Activated T-helper 1 cell treated with anti-CD3 and anti-CD28 coated beads, Interleukin-12 subunit alpha, Interleukin-12 subunit beta, Interleukin-2, Interleukin-4 antibody, amounts not matched to agents 30 ng/mL and 10 ng/mL and 1 ng/mL, durations not matched to agents 14 hours and 24 hours and 36 hours (primary cell): ENCODE measurements at regions of chr16 and their contacts with region 1.

Region 1: GRCh38 chr16:30407102-30407803 is at the start of gene ZNF771:
- DNase-seq: peak; percentile 85
- H3K4me3 Mint-ChIP-seq: peak within 1 kb of the TSS; percentile 100
- H3K27ac Mint-ChIP-seq: peak within 1 kb of the TSS; percentile 100
- H3K4me1 Mint-ChIP-seq: peaks cover 25% of the 10 kb centered on the region
- H3K27me3 Mint-ChIP-seq: peaks cover 4% of the 10 kb centered on the region
- total RNA-seq, gene ZNF771: 8.1 and 8.9 TPM in 2 replicates

Region 2: GRCh38 chr16:29765167-29766032 is 641.9 kb before region 1 on chr16:
- intact Hi-C with region 1: no loop called
- DNase-seq: no peak
- H3K4me3 Mint-ChIP-seq: no peak overlapping the region
- H3K27ac Mint-ChIP-seq: no peak overlapping the region
- H3K4me1 Mint-ChIP-seq: no peaks in the 10 kb centered on the region
- H3K27me3 Mint-ChIP-seq: peaks cover 15% of the 10 kb centered on the region

Region 3: GRCh38 chr16:30041846-30042267 is 365.4 kb before region 1 on chr16:
- intact Hi-C with region 1: no loop called
- DNase-seq: no peak
- H3K4me3 Mint-ChIP-seq: no peak overlapping the region
- H3K27ac Mint-ChIP-seq: no peak overlapping the region
- H3K4me1 Mint-ChIP-seq: no peaks in the 10 kb centered on the region
- H3K27me3 Mint-ChIP-seq: peaks cover 29% of the 10 kb centered on the region

Region 4: DNA sequence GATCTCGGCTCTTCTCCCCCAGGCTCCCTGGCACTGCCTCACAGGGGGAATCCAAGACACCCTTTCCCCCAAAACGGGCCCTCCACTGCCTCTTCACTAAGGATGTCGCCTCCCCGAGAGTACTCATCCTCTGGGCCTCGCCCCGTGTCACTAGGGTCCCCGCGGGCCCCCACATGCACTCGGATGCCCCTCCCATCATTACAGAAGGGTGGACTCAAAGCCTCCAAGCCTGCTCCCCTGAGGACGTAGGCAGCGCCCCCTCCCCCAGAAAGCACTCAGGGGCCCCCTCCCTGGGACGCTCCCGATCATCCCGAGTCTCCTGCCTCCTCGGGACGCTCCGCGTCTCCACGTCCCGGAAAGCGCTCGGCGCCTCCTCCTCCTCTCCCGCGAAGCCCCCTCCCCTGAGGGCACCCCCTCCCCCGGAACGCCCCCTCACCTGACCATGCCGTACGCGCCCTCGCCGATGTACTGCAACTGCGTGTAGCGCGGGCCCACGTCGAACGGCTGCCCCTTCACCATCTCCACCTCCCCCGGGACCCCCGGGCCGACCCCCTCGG is 284.6 kb before region 1 on chr16:
- intact Hi-C with region 1: loop called (anchors 5 kb)
- DNase-seq: peak; percentile 6
- H3K4me3 Mint-ChIP-seq: peak overlapping the region; percentile 90
- H3K27ac Mint-ChIP-seq: peak overlapping the region; percentile 91
- H3K4me1 Mint-ChIP-seq: peaks cover 32% of the 10 kb centered on the region
- H3K27me3 Mint-ChIP-seq: no peaks in the 10 kb centered on the region

Region 5: GRCh38 chr16:30370444-30371247 is 36.6 kb before region 1 on chr16 and contains the start of gene TBC1D10B:
- intact Hi-C with region 1: loop called (anchors 1 kb)
- DNase-seq: peak; percentile 99
- H3K4me3 Mint-ChIP-seq: peak within 1 kb of the TSS; percentile 94
- H3K27ac Mint-ChIP-seq: peak within 1 kb of the TSS; percentile 89
- H3K4me1 Mint-ChIP-seq: peaks cover 41% of the 10 kb centered on the region
- H3K27me3 Mint-ChIP-seq: no peaks in the 10 kb centered on the region
- total RNA-seq, gene TBC1D10B: 68.9 and 73.6 TPM in 2 replicates

Region 6: DNA sequence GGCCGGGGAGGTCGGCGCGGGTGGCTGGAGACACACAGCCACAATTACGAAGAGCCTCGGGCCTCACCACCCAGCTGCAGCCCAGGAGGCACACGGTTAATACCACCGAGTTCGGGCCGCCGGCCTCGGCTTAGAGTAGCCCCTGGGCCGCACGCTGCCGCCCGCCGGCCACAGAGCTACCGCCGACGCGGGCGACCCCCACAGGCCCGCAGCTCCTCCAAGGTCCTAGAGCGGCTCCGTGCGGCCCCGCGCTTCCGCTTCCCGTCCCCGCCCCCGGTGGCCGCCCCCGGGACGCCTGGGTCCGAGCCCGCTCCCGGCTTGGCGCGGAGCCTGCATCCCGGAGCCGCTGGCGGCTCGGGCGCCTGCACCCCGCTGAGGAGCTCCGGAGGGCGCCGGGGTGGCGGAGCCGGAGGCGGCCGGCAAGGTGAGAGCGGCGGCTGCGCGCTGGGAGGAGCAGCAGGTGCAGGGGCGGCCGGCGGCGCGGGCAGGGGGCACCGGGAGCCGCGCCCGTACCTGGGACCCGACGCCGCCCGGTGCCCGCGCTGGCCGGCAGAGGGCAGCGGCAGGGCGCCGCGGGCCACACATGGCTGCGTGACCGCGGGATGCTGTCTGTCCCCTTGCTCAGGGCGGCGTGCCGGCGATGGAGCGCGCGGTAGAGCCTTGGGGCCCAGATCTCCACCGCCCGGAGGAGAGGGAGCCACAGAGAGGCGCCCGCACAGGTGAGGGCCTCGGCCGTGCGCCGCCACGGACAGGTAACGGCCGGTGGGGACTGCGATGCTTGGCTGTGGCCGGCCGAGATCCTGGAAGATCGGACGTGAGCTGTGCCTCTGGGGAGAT is 11.9 kb before region 1 on chr16 and contains the start of gene ZNF48:
- intact Hi-C with region 1: loop called (anchors 1 kb)
- DNase-seq: peak; percentile 53
- H3K4me3 Mint-ChIP-seq: peak within 1 kb of the TSS; percentile 90
- H3K27ac Mint-ChIP-seq: peak within 1 kb of the TSS; percentile 80
- H3K4me1 Mint-ChIP-seq: peaks cover 41% of the 10 kb centered on the region
- H3K27me3 Mint-ChIP-seq: no peaks in the 10 kb centered on the region
- total RNA-seq, gene ZNF48: 20.2 and 21.4 TPM in 2 replicates

Region 7: DNA sequence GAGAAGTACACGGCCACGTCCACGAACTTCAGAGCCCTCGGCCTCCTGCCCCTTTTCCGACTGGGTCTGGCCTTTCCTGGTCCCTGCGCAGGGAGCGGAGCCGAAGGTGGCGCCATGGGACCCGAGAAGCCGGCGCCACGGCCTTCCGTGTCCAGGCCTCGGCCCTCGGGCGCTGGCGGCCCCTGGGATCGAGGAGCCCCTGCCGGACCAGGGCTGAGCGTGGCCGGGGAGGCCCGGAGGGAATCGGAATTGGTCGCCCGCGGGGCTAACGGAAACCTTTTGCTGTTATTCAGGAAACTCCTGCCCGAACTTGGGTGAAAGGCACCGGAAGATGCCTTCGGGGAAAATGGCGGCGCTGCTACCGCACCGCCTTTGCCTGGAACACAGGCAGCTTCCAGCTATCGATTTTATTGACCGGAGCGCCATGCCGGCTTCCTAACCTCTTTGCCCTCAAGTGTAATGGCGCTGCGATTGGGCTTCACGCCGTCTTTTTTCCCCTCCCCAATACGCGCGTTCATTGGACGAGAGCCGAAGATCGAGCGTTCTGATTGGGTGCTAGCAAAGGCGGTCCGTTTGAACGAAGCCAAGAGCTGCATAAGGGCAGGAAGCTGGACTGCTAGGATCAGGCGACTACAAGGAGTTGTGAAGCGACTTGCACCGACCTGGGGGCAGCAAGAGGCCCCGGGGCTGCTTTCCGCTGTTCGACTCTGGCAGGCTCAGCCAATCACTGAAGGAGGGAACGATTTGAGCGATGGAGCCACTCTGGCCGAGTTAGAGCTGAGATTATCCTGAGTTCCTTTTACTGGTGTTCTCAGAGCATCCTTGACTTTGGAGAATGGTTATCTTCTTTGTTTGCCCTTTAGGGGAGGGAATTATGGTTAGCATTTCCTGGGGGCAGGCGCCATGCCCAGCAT is 202.9 kb after region 1 on chr16 and contains the start of gene ZNF689:
- intact Hi-C with region 1: loop called (anchors 2 kb)
- DNase-seq: peak; percentile 95
- H3K4me3 Mint-ChIP-seq: peak within 1 kb of the TSS; percentile 93
- H3K27ac Mint-ChIP-seq: peak within 1 kb of the TSS; percentile 96
- H3K4me1 Mint-ChIP-seq: peaks cover 19% of the 10 kb centered on the region
- H3K27me3 Mint-ChIP-seq: no peaks in the 10 kb centered on the region
- total RNA-seq, gene ZNF689: 14.7 TPM in 2 replicates